CD4-positive, alpha-beta memory T cell (primary cell): ENCODE measurements at regions of chr5 and their contacts with region 1.

Region 1: DNA sequence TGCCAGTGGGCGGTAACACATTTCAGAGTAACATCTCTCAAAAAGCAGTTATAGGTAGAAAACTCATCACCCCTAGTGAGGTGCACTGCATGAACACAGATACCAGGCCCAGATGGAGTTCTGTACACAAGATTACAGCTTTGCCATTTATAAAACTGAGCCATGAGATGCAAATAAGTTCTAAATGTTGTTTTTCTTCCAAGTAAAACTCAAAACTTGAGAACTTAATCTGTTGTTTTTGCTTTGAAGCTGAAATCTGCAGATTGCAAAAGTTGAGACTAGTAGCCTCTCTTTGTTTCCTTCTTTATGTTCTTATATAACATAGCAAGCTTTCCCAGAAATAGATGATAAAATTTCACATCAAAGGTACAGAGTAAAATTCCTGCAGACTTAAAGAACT is 434.1 kb downstream of the PLK2 start:
- DNase-seq: no peak
- H3K4me3 ChIP-seq: no peak overlapping the region
- H3K4me3 Mint-ChIP-seq: no peak overlapping the region
- H3K27ac ChIP-seq: no peak overlapping the region
- H3K27ac Mint-ChIP-seq: no peak overlapping the region
- H3K4me1 ChIP-seq: no peaks in the 10 kb centered on the region
- H3K4me1 Mint-ChIP-seq: no peaks in the 10 kb centered on the region
- H3K27me3 ChIP-seq: no peaks in the 10 kb centered on the region
- H3K27me3 Mint-ChIP-seq: no peaks in the 10 kb centered on the region

Region 2: GRCh38 chr5:58037899-58038298 is 12.1 kb after region 1 on chr5:
- CTCF ChIA-PET with region 1: no interaction called
- POLR2A ChIA-PET with region 1: no interaction called
- intact Hi-C with region 1: loop called (anchors 1 kb)
- DNase-seq: no peak
- H3K4me3 ChIP-seq: no peak overlapping the region
- H3K4me3 Mint-ChIP-seq: no peak overlapping the region
- H3K27ac ChIP-seq: no peak overlapping the region
- H3K27ac Mint-ChIP-seq: no peak overlapping the region
- H3K4me1 ChIP-seq: no peaks in the 10 kb centered on the region
- H3K4me1 Mint-ChIP-seq: no peaks in the 10 kb centered on the region
- H3K27me3 ChIP-seq: no peaks in the 10 kb centered on the region
- H3K27me3 Mint-ChIP-seq: peaks cover 0 to 3% of the 10 kb centered on the region in 2 donors

Region 3: GRCh38 chr5:58875599-58875998 is 849.8 kb after region 1 on chr5:
- CTCF ChIA-PET with region 1: no interaction called
- POLR2A ChIA-PET with region 1: no interaction called
- intact Hi-C with region 1: no loop called
- DNase-seq: no peak
- H3K4me3 ChIP-seq: no peak overlapping the region
- H3K4me3 Mint-ChIP-seq: no peak overlapping the region
- H3K27ac ChIP-seq: no peak overlapping the region
- H3K27ac Mint-ChIP-seq: no peak overlapping the region
- H3K4me1 ChIP-seq: no peaks in the 10 kb centered on the region
- H3K4me1 Mint-ChIP-seq: no peaks in the 10 kb centered on the region
- H3K27me3 ChIP-seq: no peaks in the 10 kb centered on the region
- H3K27me3 Mint-ChIP-seq: peaks cover 13 to 15% of the 10 kb centered on the region in 2 donors